PC-9 (cell line): ENCODE measurements at regions of chr3 and their contacts with region 1.

Region 1: GRCh38 chr3:157618075-157618760 is 115.0 kb upstream of the VEPH1 start:
- DNase-seq: peak in 1 of 2 experiments; percentile 84
- H3K4me3 ChIP-seq: no peak overlapping the region
- H3K27ac ChIP-seq: no peak overlapping the region
- H3K4me1 ChIP-seq: peaks cover 6% of the 10 kb centered on the region; the same call in 1 of the 2 replicates
- H3K27me3 ChIP-seq: no peaks in the 10 kb centered on the region
- CTCF ChIP-seq: peak; percentile 78

Region 2: GRCh38 chr3:157905885-157906284 is 287.7 kb after region 1 on chr3:
- CTCF ChIA-PET with region 1: no interaction called
- POLR2A ChIA-PET with region 1: no interaction called
- intact Hi-C with region 1: no loop called
- DNase-seq: no peak
- H3K4me3 ChIP-seq: no peak overlapping the region
- H3K27ac ChIP-seq: no peak overlapping the region
- H3K4me1 ChIP-seq: no peaks in the 10 kb centered on the region
- H3K27me3 ChIP-seq: no peaks in the 10 kb centered on the region
- CTCF ChIP-seq: no peak

Region 3: DNA sequence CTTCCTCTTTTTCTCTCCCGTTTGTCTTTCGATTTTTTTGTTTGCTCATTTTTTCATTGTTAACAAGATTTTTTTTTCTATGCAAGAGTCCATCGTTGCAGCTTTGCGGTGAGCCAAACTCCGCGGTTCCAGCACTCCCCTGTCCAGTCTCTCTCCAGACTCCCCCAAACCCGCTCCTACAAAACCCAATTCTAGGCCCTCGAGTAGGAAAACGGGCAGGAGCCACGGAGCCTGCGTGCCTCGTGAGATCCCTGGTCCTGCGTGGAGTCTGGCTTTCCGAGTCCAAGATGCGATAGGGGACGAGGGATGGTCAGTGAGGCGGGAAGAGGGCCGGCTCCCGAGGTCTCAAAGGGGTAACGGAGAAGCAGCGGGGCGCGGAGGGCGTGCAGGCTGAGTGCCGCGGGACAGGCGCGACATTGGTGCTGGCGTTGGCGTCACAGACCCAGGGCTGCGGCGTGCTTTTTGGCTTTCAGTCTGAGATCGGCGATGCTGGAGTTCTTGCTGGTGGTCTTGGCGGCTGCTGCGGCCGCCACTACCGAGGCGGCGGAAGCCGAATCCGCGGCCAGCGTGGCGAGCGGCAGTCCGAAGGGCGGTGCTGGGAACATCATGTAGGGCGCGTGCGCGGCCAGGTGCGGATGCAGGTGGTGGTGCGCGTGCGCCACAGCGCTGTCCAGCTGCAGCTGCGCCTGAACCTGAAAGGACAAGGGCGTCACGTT is 479.5 kb after region 1 on chr3:
- CTCF ChIA-PET with region 1: no interaction called
- POLR2A ChIA-PET with region 1: no interaction called
- intact Hi-C with region 1: loop called (anchors 5 kb)
- DNase-seq: peak; percentile 81 to 89
- H3K4me3 ChIP-seq: peak overlapping the region; percentile 80
- H3K27ac ChIP-seq: no peak overlapping the region
- H3K4me1 ChIP-seq: no peaks in the 10 kb centered on the region; the same call in 1 of the 2 replicates
- H3K27me3 ChIP-seq: no peaks in the 10 kb centered on the region
- CTCF ChIP-seq: no peak

Region 4: GRCh38 chr3:158434412-158435038 is 816.3 kb after region 1 on chr3:
- CTCF ChIA-PET with region 1: interaction called, 5 read pairs
- POLR2A ChIA-PET with region 1: no interaction called
- intact Hi-C with region 1: loop called (anchors 1 kb)
- DNase-seq: peak; percentile 37 to 42
- H3K4me3 ChIP-seq: no peak overlapping the region
- H3K27ac ChIP-seq: no peak overlapping the region
- H3K4me1 ChIP-seq: no peaks in the 10 kb centered on the region
- H3K27me3 ChIP-seq: no peaks in the 10 kb centered on the region
- CTCF ChIP-seq: peak; percentile 87

Region 5: GRCh38 chr3:158644345-158644908 is 1026.2 kb after region 1 on chr3 and contains the start of gene GFM1:
- CTCF ChIA-PET with region 1: interaction called, 4 read pairs
- POLR2A ChIA-PET with region 1: no interaction called
- intact Hi-C with region 1: loop called (anchors 10 kb)
- DNase-seq: peak; percentile 89 to 92
- H3K4me3 ChIP-seq: peak within 1 kb of the TSS; percentile 96
- H3K27ac ChIP-seq: peak within 1 kb of the TSS; percentile 59
- H3K4me1 ChIP-seq: peaks cover 16% of the 10 kb centered on the region
- H3K27me3 ChIP-seq: no peaks in the 10 kb centered on the region
- CTCF ChIP-seq: peak; percentile 78
- total RNA-seq, gene GFM1: 43.0 and 45.4 TPM in 2 replicates